Right ventricle myocardium superior (tissue), 1 donor: ENCODE measurements at regions of chr18 and their contacts with region 1.

Region 1: DNA sequence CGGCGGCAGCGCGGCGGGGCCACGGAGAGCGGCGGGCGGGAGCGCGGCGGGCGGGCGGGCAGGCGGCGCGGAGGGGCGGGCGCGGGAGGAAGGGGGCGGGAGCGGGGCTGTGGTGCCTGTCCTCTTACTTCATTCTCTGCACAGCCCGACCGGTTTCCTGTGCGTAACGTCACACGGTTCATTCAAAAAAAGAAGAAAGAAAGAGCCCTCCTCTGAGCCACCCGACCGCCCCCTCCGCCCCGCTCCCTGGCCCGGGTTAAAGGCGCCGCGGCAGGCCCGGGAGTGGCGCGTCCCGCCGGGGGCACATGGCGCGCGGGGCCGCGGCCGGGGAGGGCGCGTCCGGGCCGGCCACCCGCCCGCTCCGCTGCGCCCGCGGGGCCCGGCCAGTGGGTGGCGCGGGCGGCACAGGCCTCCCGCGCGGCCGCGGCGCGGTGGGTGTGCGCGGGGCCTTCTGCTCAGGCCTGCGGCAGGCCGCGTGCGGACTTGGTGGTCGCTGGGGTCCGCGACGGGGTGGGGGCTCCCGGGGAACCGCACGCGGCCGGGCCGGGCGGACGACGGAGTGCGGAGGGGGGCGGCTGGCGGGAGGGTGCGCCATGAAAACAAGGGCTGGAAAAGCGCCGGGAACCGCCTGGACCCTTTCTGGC is 599 bp upstream of the BCL2 start:
- DNase-seq: peak; percentile 90
- ATAC-seq: peak; percentile 76

Region 2: GRCh38 chr18:63016270-63016669 is 303.9 kb before region 1 on chr18:
- intact Hi-C with region 1: loop called (anchors 2 kb)
- DNase-seq: no peak
- ATAC-seq: peak; percentile 78

Region 3: DNA sequence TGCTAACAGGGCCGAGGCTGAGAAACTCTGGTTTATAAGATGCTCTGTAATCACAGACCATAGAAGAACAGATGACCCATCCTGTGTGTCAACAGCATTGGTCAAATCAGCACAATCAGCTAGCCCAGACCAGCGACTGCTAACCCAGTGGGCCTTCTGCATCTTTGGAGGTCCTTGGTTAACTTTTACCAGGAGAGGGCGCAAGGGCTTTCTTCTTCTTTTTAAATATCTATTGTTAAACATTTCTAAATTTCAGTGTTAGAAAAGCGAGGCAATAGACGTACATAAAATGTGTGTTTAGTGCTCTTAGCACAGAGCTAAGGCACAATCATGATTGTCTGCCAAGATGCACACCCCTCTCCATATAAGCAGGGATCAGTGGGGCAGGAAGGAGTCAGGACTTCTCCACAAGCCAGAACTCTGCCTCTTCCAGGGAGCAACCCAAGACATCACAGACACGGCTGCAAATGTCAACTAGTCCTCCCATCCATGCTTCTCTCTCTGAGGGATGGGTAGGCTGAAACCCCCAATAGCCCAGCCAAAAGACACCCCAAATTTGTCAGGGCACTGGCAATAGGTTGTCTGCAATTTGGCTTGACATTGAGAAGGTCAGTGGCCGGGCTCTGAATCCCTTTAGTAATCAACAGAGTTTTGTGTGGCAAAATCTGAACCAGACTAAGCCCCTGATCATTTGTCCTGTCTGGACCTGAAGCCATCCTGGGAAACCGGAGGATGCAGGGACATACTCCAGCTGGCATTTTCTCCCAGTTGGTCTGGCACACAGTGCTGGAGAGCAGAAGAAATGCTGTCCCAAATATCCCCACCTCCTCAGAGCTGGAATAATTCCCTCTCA is 188.8 kb before region 1 on chr18:
- intact Hi-C with region 1: loop called (anchors 5 kb)
- DNase-seq: no peak
- ATAC-seq: peak; percentile 72